Astrocyte of the cerebellum (primary cell): ENCODE measurements at regions of chr2 and their contacts with region 1.

Region 1: GRCh38 chr2:32559136-32559535 is 68.7 kb upstream of the TTC27 start:
- DNase-seq: no peak
- H3K4me3 ChIP-seq: no peak overlapping the region
- CTCF ChIP-seq: no peak

Region 2: DNA sequence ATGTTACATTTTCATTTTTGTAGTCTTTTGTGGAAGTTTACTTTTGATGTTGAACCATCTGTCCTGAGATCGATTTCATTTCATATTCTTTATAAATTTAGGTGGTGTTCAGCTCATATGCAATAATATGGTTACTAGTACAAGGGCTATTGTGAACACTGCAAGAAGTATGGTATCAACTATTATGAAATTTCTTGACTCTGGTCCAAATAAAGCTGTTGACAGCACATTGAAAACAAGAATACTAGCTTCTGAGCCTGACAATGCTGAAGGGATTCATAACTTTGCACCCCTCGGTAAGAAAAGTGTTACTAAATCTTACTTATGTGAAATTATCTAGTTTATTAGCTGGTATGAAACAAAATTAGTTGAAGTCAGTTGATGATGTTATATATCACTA is 56.2 kb before region 1 on chr2:
- in situ Hi-C with region 1: loop called (anchors 5 kb)
- DNase-seq: no peak
- H3K4me3 ChIP-seq: no peak overlapping the region
- CTCF ChIP-seq: no peak

Region 3: DNA sequence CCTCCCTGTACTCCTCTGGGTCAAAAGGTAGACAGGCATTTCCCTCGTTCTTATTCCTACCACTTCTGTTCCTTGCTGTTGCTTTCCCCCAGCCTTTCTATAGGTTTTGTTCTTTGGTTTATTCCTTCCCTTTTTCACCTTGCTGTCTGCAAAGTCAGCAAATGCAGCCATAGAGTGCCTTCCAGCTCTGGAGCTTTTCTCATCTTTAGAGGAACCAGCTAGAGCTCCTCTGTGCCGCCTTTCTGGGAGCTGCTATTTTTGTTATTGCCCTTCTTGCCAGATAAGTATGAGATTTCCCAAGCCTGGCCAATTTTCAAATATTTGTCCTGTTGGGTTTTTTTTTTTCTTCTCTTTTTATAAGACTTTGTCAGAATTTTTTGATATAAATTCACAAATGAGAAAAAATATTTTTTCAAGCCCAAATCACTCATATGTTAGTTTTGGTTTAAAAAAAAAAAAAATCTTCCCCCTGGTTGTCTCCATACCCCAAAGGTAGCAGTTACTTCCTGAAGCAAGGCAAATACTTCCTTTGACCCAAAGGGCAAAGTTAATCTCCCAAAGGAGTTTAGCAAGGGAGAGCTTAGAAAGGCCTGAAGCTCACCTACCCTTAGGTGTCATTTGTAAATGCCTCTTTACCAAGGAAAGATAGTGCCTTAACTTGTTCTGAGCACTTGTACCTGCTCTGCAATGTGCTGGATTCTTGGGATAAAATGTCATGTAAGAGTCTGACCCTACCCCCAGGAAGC is 63.6 kb after region 1 on chr2:
- in situ Hi-C with region 1: no loop called
- DNase-seq: no peak
- H3K4me3 ChIP-seq: no peak overlapping the region
- CTCF ChIP-seq: no peak